CD4-positive, alpha-beta memory T cell (primary cell): ENCODE measurements at regions of chr10 and their contacts with region 1.

Region 1: DNA sequence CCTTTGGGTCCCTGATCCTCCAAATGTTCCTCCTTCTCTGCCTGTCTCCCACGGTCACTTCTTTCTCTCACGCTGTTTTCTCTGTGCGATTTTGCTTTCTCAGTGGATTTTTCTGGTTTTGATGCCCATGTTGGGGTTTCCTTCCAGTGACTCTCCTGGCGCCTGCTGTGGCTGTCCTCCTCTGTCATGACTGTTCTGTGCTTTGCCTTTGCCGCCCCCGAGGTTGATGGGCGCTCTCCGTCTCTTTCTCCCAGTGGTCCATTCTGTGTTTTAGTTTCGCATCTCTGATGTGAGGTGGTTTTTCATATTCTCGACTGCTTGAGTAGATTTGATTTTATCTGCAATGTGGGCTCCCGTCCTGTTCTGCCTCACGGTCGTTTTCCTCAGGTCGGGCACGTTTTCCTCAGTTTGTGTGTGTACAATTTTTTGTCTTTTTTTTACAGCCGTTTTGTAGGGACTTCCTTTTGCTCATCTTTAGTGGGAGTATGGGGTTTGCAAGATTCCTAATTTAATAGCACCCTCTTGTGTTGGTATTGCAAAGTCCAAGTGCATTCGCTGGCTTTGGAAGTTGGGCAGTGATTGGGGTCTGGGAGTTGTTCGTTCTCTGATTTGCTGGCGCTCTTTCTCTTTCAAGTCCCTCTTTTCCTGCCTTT is 100.0 kb downstream of the INPP5A start:
- DNase-seq: peak in 4 of 5 donors; percentile 43 to 55 (median 49)
- H3K4me3 ChIP-seq: no peak overlapping the region
- H3K4me3 Mint-ChIP-seq: peak overlapping the region in 3 of 8 donors; percentile 40 to 53 (median 52)
- H3K27ac ChIP-seq: no peak overlapping the region
- H3K27ac Mint-ChIP-seq: peak overlapping the region in 5 of 7 donors; percentile 7 to 50 (median 39)
- H3K4me1 ChIP-seq: peaks cover 8% of the 10 kb centered on the region
- H3K4me1 Mint-ChIP-seq: peaks cover 17 to 28% (median 20%) of the 10 kb centered on the region in 4 donors
- H3K27me3 ChIP-seq: no peaks in the 10 kb centered on the region
- H3K27me3 Mint-ChIP-seq: no peaks in the 10 kb centered on the region

Region 2: GRCh38 chr10:132223156-132223590 is 414.4 kb before region 1 on chr10:
- CTCF ChIA-PET with region 1: no interaction called
- POLR2A ChIA-PET with region 1: no interaction called
- intact Hi-C with region 1: loop called (anchors 2 kb)
- DNase-seq: peak in 4 of 5 donors; percentile 41 to 58 (median 52)
- H3K4me3 ChIP-seq: no peak overlapping the region
- H3K4me3 Mint-ChIP-seq: no peak overlapping the region
- H3K27ac ChIP-seq: no peak overlapping the region
- H3K27ac Mint-ChIP-seq: no peak overlapping the region
- H3K4me1 ChIP-seq: no peaks in the 10 kb centered on the region
- H3K4me1 Mint-ChIP-seq: peaks cover 0 to 6% (median 2%) of the 10 kb centered on the region in 4 donors
- H3K27me3 ChIP-seq: no peaks in the 10 kb centered on the region
- H3K27me3 Mint-ChIP-seq: no peaks in the 10 kb centered on the region

Region 3: DNA sequence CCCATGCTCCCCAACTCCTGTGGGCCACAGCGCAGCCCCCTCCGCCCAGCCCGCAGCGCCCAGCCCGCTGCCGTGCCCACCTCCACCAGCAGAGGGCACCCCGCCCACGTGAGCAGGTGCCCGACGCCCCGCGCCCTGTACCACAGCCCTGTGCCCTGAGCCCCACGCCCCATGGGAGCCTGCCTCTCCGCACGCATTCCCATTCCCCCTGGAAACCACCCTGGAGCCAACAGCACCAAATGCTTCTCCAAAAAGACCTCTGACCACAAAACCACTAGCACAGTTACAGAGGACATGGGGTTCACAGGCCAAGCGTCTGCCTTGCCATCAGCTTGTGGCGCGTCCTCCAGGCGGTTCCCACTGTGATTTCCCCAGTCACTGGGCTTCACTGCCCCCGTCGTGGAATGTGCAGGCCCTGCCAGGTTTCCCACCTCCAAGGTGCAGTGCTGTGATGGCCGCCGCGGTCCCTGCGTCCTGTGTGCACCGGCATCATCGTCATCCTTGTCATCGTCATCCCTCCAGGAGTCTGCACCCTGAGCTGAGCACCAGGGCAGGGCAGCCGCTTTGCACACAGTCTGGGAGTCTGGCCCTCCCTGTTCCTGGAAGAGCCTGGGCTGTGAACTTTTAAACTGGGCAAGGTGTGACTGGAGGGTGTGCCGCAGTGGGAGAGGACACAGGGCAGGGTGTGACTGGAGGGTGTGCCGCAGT is 178.9 kb before region 1 on chr10:
- CTCF ChIA-PET with region 1: interaction called, 26 read pairs
- POLR2A ChIA-PET with region 1: no interaction called
- intact Hi-C with region 1: no loop called
- DNase-seq: peak in 4 of 5 donors; percentile 57 to 68 (median 60)
- H3K4me3 ChIP-seq: no peak overlapping the region
- H3K4me3 Mint-ChIP-seq: no peak overlapping the region
- H3K27ac ChIP-seq: no peak overlapping the region
- H3K27ac Mint-ChIP-seq: peak overlapping the region in 3 of 7 donors; percentile 19 to 81 (median 77)
- H3K4me1 ChIP-seq: no peaks in the 10 kb centered on the region
- H3K4me1 Mint-ChIP-seq: no peaks in the 10 kb centered on the region
- H3K27me3 ChIP-seq: no peaks in the 10 kb centered on the region
- H3K27me3 Mint-ChIP-seq: no peaks in the 10 kb centered on the region

Region 4: GRCh38 chr10:132684164-132684891 is 46.7 kb after region 1 on chr10:
- CTCF ChIA-PET with region 1: no interaction called
- POLR2A ChIA-PET with region 1: no interaction called
- intact Hi-C with region 1: no loop called
- DNase-seq: peak in 4 of 5 donors; percentile 13 to 38 (median 27)
- H3K4me3 ChIP-seq: no peak overlapping the region
- H3K4me3 Mint-ChIP-seq: peak overlapping the region in 5 of 8 donors; percentile 7 to 47 (median 23)
- H3K27ac ChIP-seq: no peak overlapping the region
- H3K27ac Mint-ChIP-seq: peak overlapping the region in 6 of 7 donors; percentile 4 to 76 (median 48)
- H3K4me1 ChIP-seq: peaks cover 9% of the 10 kb centered on the region
- H3K4me1 Mint-ChIP-seq: peaks cover 18 to 36% (median 24%) of the 10 kb centered on the region in 4 donors
- H3K27me3 ChIP-seq: no peaks in the 10 kb centered on the region
- H3K27me3 Mint-ChIP-seq: no peaks in the 10 kb centered on the region